Activated CD8-positive, alpha-beta T cell treated with anti-CD3 and anti-CD28 coated beads, Interleukin-2, amount 10 ng/mL, durations not matched to agents 7 days and 5 days (primary cell): ENCODE measurements at regions of chr6 and their contacts with region 1.

Region 1: GRCh38 chr6:15691250-15691869 is 28.5 kb upstream of the DTNBP1 start:
- DNase-seq: peak; percentile 87
- ATAC-seq: peak; percentile 99
- H3K4me3 Mint-ChIP-seq: no peak overlapping the region
- H3K27ac Mint-ChIP-seq: no peak overlapping the region
- H3K4me1 Mint-ChIP-seq: peaks cover 9% of the 10 kb centered on the region
- H3K27me3 Mint-ChIP-seq: peaks cover 9% of the 10 kb centered on the region

Region 2: GRCh38 chr6:16128759-16129622 is 437.6 kb after region 1 on chr6 and contains the start of gene MYLIP:
- CTCF ChIA-PET with region 1: interaction called, 23 read pairs
- POLR2A ChIA-PET with region 1: no interaction called
- DNase-seq: peak; percentile 97
- ATAC-seq: peak; percentile 84
- H3K4me3 Mint-ChIP-seq: peak within 1 kb of the TSS; percentile 88
- H3K27ac Mint-ChIP-seq: peak within 1 kb of the TSS; percentile 93
- H3K4me1 Mint-ChIP-seq: peaks cover 35% of the 10 kb centered on the region
- H3K27me3 Mint-ChIP-seq: peaks cover 19% of the 10 kb centered on the region
- total RNA-seq, gene MYLIP: 17.3 to 17.6 TPM

Region 3: DNA sequence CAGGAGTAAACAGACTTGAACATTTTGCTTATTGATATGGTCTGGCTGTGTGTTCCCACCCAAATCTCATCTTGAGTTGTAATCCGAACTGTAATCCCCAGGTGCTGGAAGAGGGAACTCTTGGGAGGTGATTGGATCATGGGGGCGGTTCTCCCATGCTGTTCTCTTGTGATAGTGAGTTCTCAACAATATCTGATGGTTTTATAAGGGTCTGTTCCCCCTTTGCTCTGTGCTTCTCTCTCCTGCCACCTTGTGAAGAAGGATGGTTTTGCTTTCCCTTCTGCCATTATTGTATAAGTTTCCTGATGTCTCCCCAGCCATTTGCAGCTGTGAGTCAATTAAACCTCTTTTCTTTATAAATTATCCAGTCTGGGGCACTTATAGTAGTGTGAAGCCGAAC is 477.5 kb after region 1 on chr6:
- CTCF ChIA-PET with region 1: interaction called, 12 read pairs
- POLR2A ChIA-PET with region 1: no interaction called
- DNase-seq: peak; percentile 39
- ATAC-seq: peak; percentile 79
- H3K4me3 Mint-ChIP-seq: no peak overlapping the region
- H3K27ac Mint-ChIP-seq: peak overlapping the region; percentile 37
- H3K4me1 Mint-ChIP-seq: peaks cover 25% of the 10 kb centered on the region
- H3K27me3 Mint-ChIP-seq: peaks cover 16% of the 10 kb centered on the region

Region 4: GRCh38 chr6:16206595-16207037 is 515.3 kb after region 1 on chr6:
- CTCF ChIA-PET with region 1: interaction called, 54 read pairs
- POLR2A ChIA-PET with region 1: no interaction called
- DNase-seq: peak; percentile 56
- ATAC-seq: no peak
- H3K4me3 Mint-ChIP-seq: no peak overlapping the region
- H3K27ac Mint-ChIP-seq: no peak overlapping the region
- H3K4me1 Mint-ChIP-seq: peaks cover 6% of the 10 kb centered on the region
- H3K27me3 Mint-ChIP-seq: peaks cover 15% of the 10 kb centered on the region